Naive thymus-derived CD4-positive, alpha-beta T cell (primary cell): ENCODE measurements at regions of chr21 and their contacts with region 1.

Region 1: GRCh38 chr21:42400525-42400924 is 3.2 kb upstream of the UBASH3A start:
- DNase-seq: peak in 1 of 9 donors; percentile 54
- ATAC-seq: no peak
- H3K4me3 ChIP-seq: no peak overlapping the region
- H3K4me3 Mint-ChIP-seq: peak overlapping the region in 4 of 10 donors; percentile 18 to 37 (median 32)
- H3K27ac ChIP-seq: no peak overlapping the region
- H3K27ac Mint-ChIP-seq: peak overlapping the region in 5 of 9 donors; percentile 8 to 87 (median 32)
- H3K4me1 ChIP-seq: peaks cover 21 to 42% of the 10 kb centered on the region in 2 donors
- H3K4me1 Mint-ChIP-seq: peaks cover 32 to 71% (median 61%) of the 10 kb centered on the region in 7 donors
- H3K27me3 ChIP-seq: no peaks in the 10 kb centered on the region
- H3K27me3 Mint-ChIP-seq: no peaks in the 10 kb centered on the region

Region 2: GRCh38 chr21:42009831-42010523 is 390.5 kb before region 1 on chr21 and contains the start of gene ZBTB21:
- CTCF ChIA-PET with region 1: no interaction called
- POLR2A ChIA-PET with region 1: no interaction called
- intact Hi-C with region 1: loop called in 1 of 2 experiments (anchors 10 kb)
- DNase-seq: peak; percentile 96 to 99 (median 98)
- ATAC-seq: peak; percentile 87
- H3K4me3 ChIP-seq: peak within 1 kb of the TSS; percentile 78
- H3K4me3 Mint-ChIP-seq: peak within 1 kb of the TSS; percentile 93 to 99 (median 96)
- H3K27ac ChIP-seq: peak within 1 kb of the TSS; percentile 92
- H3K27ac Mint-ChIP-seq: peak within 1 kb of the TSS; percentile 99 to 100 (median 99)
- H3K4me1 ChIP-seq: peaks cover 0 to 5% of the 10 kb centered on the region in 2 donors
- H3K4me1 Mint-ChIP-seq: peaks cover 7 to 48% (median 41%) of the 10 kb centered on the region in 7 donors
- H3K27me3 ChIP-seq: no peaks in the 10 kb centered on the region
- H3K27me3 Mint-ChIP-seq: peaks cover 0 to 24% (median 0%) of the 10 kb centered on the region in 5 donors
- total RNA-seq, gene ZBTB21: 16.8 to 137 (median 25.2) TPM

Region 3: GRCh38 chr21:42360317-42360716 is 40.2 kb before region 1 on chr21:
- CTCF ChIA-PET with region 1: interaction called, 3 read pairs
- POLR2A ChIA-PET with region 1: interaction called, 10 read pairs
- intact Hi-C with region 1: loop called in 1 of 2 experiments (anchors 5 kb)
- DNase-seq: no peak
- ATAC-seq: no peak
- H3K4me3 ChIP-seq: no peak overlapping the region
- H3K4me3 Mint-ChIP-seq: no peak overlapping the region
- H3K27ac ChIP-seq: no peak overlapping the region
- H3K27ac Mint-ChIP-seq: no peak overlapping the region
- H3K4me1 ChIP-seq: no peaks in the 10 kb centered on the region
- H3K4me1 Mint-ChIP-seq: peaks cover 0 to 7% (median 4%) of the 10 kb centered on the region in 7 donors
- H3K27me3 ChIP-seq: no peaks in the 10 kb centered on the region
- H3K27me3 Mint-ChIP-seq: peaks cover 0 to 27% (median 0%) of the 10 kb centered on the region in 5 donors

Region 4: GRCh38 chr21:42414928-42415769 is 14.6 kb after region 1 on chr21:
- CTCF ChIA-PET with region 1: interaction called, 3 read pairs
- POLR2A ChIA-PET with region 1: interaction called, 181 read pairs
- intact Hi-C with region 1: loop called (anchors 1 kb)
- DNase-seq: peak; percentile 48 to 96 (median 80)
- ATAC-seq: peak; percentile 96
- H3K4me3 ChIP-seq: peak overlapping the region; percentile 49
- H3K4me3 Mint-ChIP-seq: peak overlapping the region; percentile 65 to 85 (median 75)
- H3K27ac ChIP-seq: peak overlapping the region; percentile 92
- H3K27ac Mint-ChIP-seq: peak overlapping the region in 8 of 9 donors; percentile 88 to 99 (median 97)
- H3K4me1 ChIP-seq: peaks cover 59 to 77% of the 10 kb centered on the region in 2 donors
- H3K4me1 Mint-ChIP-seq: peaks cover 23 to 75% (median 69%) of the 10 kb centered on the region in 7 donors
- H3K27me3 ChIP-seq: no peaks in the 10 kb centered on the region
- H3K27me3 Mint-ChIP-seq: no peaks in the 10 kb centered on the region

Region 5: DNA sequence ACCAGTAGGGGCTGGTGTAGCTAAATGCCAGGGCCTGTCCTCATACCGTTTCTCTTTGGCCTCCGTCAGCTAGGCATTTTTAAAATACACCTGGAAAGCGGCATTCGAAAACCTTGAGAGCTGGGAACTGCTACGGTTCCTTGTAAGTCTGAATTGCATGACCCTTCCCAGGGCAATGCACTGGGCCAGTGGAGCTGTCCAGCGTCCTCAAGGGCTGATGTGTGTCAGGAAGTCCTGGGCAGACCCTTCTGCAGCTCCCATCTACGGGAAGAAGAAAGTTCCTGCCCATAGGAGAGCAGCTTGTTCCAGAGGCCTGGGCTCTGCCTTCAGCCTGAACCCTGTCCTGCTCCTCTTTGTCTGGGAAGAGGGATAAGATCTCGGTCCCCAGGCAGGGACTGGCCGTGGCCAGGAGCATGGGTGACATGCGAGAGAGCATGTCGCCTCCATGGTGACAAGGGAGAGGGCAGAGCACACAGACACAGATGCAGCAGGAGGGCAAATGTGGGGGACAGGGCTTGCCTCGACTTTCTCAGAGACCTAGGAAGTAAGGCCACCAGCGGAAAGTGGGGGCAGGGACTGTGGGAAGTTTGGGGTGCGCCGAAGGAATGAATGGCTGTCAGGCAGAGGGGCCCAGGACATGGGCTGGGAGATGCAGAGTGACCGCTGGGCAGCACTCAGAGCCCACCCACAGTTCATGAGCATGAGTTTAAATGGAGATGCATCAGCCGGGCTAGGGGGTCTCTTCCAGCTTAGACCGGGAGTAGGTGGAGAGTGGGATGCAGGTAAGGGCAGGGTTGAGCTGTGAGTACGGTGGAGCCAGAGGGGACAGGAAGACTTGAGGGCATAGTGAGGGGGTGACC is 37.5 kb after region 1 on chr21:
- CTCF ChIA-PET with region 1: interaction called, 4 read pairs
- POLR2A ChIA-PET with region 1: interaction called, 14 read pairs
- intact Hi-C with region 1: no loop called
- DNase-seq: no peak
- ATAC-seq: no peak
- H3K4me3 ChIP-seq: no peak overlapping the region
- H3K4me3 Mint-ChIP-seq: no peak overlapping the region
- H3K27ac ChIP-seq: no peak overlapping the region
- H3K27ac Mint-ChIP-seq: peak overlapping the region in 6 of 9 donors; percentile 14 to 82 (median 66)
- H3K4me1 ChIP-seq: peaks cover 10 to 21% of the 10 kb centered on the region in 2 donors
- H3K4me1 Mint-ChIP-seq: peaks cover 35 to 72% (median 56%) of the 10 kb centered on the region in 7 donors
- H3K27me3 ChIP-seq: no peaks in the 10 kb centered on the region
- H3K27me3 Mint-ChIP-seq: no peaks in the 10 kb centered on the region

Region 6: DNA sequence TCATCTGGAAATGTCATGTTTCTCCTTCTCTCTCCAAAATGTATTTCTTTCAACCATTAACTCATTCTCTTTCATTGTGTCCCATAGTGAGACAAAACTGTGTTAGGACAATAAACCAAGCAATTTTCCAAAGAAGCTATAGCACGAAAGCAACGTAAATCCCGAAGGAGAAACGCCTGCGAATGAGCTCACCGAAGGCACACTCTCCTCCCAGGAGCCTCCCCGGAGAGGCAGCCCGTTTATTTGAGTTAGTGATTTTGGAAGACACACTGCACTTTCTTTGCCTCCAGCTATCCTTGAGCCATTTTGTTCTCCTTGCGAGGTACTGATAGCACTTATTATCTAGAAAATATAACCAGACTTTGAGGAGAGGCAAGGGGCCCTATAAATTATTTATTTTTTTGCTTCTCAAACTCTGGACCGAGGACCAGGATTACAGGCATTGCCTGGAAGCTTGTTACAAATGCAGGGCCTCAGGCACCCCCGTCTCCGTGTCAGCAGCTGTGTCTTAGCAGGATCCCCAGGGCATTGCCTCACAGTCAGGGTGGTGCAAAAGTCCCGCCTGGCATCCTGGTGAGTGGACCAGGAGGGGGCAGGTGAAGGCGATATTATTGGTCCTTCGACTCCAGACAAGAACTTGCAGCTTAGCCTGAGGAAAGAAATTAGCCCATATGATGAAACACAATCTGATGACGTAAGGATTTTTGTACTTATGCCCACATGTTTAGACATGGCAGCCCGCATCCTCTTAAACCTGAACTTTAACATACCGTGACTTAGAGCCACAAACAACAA is 54.5 kb after region 1 on chr21:
- CTCF ChIA-PET with region 1: interaction called, 9 read pairs
- POLR2A ChIA-PET with region 1: interaction called, 11 read pairs
- intact Hi-C with region 1: loop called in 1 of 2 experiments (anchors 1 kb)
- DNase-seq: no peak
- ATAC-seq: no peak
- H3K4me3 ChIP-seq: no peak overlapping the region
- H3K4me3 Mint-ChIP-seq: peak overlapping the region in 1 of 10 donors; percentile 17
- H3K27ac ChIP-seq: no peak overlapping the region
- H3K27ac Mint-ChIP-seq: peak overlapping the region in 2 of 9 donors; percentile 32 to 45
- H3K4me1 ChIP-seq: peaks cover 0 to 17% of the 10 kb centered on the region in 2 donors
- H3K4me1 Mint-ChIP-seq: peaks cover 19 to 61% (median 48%) of the 10 kb centered on the region in 7 donors
- H3K27me3 ChIP-seq: no peaks in the 10 kb centered on the region
- H3K27me3 Mint-ChIP-seq: no peaks in the 10 kb centered on the region